Mammary epithelial cell (primary cell): ENCODE measurements at regions of chr5 and their contacts with region 1.

Region 1: GRCh38 chr5:132410451-132411381 is 41.2 kb downstream of the SLC22A5 start:
- DNase-seq: no peak
- H3K4me3 ChIP-seq: peak overlapping the region; percentile 47 to 73 (median 68)
- H3K27ac ChIP-seq: peak overlapping the region; percentile 41
- H3K4me1 ChIP-seq: peaks cover 24% of the 10 kb centered on the region
- H3K27me3 ChIP-seq: no peaks in the 10 kb centered on the region
- CTCF ChIP-seq: peak; percentile 26 to 76

Region 2: DNA sequence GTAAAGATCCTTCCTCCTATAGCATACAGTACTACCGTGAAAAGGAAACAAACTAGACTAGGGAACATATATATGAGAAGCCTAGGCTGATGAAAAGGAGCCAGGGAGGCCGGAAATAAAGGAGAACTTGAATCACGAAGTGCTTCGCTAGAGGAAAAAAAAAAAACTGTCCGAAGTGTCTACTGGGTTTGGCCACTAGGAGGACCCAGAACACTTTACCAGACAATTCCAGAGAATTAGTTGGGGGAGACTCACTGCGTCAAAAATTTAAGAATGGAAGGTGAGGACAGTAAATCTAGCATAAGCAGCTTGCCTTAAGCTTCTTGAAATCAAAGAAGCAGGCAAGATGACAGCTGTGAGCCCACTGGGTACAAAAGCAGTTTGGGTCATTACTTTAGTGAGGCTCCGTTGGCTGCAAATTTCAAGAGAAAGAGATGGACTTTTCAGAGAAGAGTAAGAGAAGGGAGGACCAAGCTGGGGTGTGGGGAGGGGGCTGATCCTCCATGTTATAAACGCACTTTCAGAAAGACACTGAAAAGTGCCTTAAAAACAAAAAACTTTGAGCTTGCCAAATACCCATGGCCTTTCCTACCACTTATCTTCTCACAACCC is 230.5 kb before region 1 on chr5:
- CTCF ChIA-PET with region 1: no interaction called
- dilution Hi-C with region 1: no loop called
- in situ Hi-C with region 1: no loop called
- intact Hi-C with region 1: loop called (anchors 1 kb)
- DNase-seq: peak; percentile 63
- H3K4me3 ChIP-seq: no peak overlapping the region
- H3K27ac ChIP-seq: no peak overlapping the region
- H3K4me1 ChIP-seq: peaks cover 22% of the 10 kb centered on the region
- H3K27me3 ChIP-seq: no peaks in the 10 kb centered on the region
- CTCF ChIP-seq: peak; percentile 79 to 87

Region 3: DNA sequence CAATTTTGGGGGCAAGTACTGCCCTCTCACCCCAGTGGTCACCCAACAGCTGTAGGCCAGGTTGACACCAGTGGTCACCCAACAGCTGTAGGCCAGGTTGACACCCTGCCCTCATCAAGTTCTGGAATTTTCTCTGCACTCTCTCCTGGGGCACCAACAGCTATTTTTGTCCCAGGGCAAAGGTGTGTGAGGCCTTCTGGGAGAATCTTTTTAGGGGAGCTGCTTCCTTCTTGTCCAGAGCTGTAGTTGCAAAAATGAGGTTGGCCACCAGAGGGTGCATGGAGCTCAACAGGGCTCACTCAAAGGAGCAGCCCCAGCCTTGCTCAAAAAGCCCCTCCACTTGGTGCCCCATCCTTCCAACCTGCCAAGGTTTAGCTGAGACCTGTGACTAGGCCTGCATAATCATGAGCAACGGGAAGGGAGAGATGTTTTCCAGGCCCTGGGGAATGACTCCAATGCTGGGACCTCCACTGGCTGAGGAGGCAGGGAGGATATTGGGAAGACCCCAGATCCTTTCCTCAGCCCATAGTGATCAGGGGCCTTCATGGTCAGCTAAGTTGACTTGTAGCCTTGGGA is 172.5 kb before region 1 on chr5:
- CTCF ChIA-PET with region 1: no interaction called
- dilution Hi-C with region 1: no loop called
- in situ Hi-C with region 1: no loop called
- intact Hi-C with region 1: loop called (anchors 5 kb)
- DNase-seq: peak; percentile 50
- H3K4me3 ChIP-seq: no peak overlapping the region
- H3K27ac ChIP-seq: no peak overlapping the region
- H3K4me1 ChIP-seq: peaks cover 12% of the 10 kb centered on the region
- H3K27me3 ChIP-seq: no peaks in the 10 kb centered on the region
- CTCF ChIP-seq: peak; percentile 76 to 89

Region 4: DNA sequence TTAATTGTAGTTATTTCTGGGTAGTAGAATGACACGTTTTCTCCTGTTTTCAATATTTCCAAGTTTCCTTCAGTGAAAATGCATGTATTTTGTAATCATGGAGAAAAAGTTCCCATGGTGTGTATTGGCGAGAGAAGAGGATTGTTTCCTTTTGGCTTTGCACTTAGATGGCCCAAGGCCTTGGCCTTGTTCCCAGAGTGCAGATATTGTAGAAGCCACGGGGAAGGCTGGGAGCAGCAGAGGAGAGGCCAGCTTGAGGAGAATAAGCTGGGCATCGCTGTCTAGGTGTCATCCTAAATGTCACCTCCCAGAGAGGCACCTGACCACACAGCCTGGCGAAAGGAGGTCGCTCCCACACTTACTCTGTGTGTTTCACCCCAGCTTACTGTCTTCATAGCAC is 36.0 kb after region 1 on chr5:
- CTCF ChIA-PET with region 1: no interaction called
- dilution Hi-C with region 1: loop called (anchors 5 kb)
- in situ Hi-C with region 1: no loop called
- intact Hi-C with region 1: no loop called
- DNase-seq: no peak
- H3K4me3 ChIP-seq: no peak overlapping the region
- H3K27ac ChIP-seq: no peak overlapping the region
- H3K4me1 ChIP-seq: peaks cover 25% of the 10 kb centered on the region
- H3K27me3 ChIP-seq: no peaks in the 10 kb centered on the region
- CTCF ChIP-seq: no peak

Region 5: GRCh38 chr5:132759114-132760048 is 348.7 kb after region 1 on chr5:
- CTCF ChIA-PET with region 1: no interaction called
- dilution Hi-C with region 1: no loop called
- in situ Hi-C with region 1: no loop called
- intact Hi-C with region 1: no loop called
- DNase-seq: no peak
- H3K4me3 ChIP-seq: no peak overlapping the region
- H3K27ac ChIP-seq: no peak overlapping the region
- H3K4me1 ChIP-seq: no peaks in the 10 kb centered on the region
- H3K27me3 ChIP-seq: no peaks in the 10 kb centered on the region
- CTCF ChIP-seq: no peak